GM12878 (cell line): ENCODE measurements at regions of chr17 and their contacts with region 1.

Region 1: DNA sequence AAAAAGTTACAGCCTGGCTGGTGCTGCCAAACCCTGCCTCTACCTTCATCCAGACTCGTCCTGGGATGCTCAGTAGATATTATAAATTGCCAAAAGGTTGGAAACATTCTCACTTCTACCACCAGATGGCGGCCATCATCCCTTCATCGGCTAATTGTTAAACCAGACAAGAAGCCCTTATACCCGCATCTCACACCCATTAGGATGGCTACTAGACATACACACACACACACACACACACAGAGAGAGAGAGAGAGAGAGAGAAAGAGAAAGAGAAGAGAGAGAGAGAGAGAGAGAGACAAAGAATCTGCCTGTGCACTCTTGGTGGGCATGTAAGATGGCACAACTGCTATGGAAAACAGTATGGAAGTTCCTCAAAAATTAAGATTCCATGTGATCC is 15.0 kb upstream of the SCIMP start:
- DNase-seq: no peak
- ATAC-seq: peak; percentile 95
- H3K4me3 ChIP-seq: no peak overlapping the region
- H3K27ac ChIP-seq: no peak overlapping the region
- H3K4me1 ChIP-seq: peaks cover 9% of the 10 kb centered on the region
- H3K27me3 ChIP-seq: no peaks in the 10 kb centered on the region
- CTCF ChIP-seq: peak; percentile 51 to 69 (median 67)
- EP300 ChIP-seq: no peak
- POLR2A ChIP-seq: no peak
- RAD21 ChIP-seq: peak; percentile 82

Region 2: DNA sequence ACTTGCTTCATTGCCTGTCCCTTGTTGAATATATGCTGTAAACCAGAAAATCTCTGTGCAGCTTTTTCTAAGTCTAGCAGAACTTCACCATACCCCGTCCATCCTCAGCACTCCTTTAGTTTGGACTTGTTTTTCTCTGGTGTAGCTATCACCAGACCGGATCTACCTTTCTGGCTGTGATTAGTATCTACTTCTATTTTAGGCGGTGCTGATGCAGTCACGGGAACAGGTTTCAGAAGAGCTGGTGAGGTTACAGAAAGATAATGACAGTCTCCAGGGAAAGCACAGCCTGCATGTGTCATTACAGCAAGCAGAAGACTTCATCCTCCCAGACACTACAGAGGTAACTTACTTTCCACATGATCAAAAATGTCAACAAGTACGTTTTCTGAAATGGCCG is 123.5 kb after region 1 on chr17:
- CTCF ChIA-PET with region 1: interaction called, 21 read pairs
- POLR2A ChIA-PET with region 1: no interaction called
- RAD21 ChIA-PET with region 1: no interaction called
- SMC1A ChIA-PET with region 1: no interaction called
- in situ Hi-C with region 1: no loop called
- intact Hi-C with region 1: no loop called
- DNase-seq: peak; percentile 61
- ATAC-seq: peak; percentile 96
- H3K4me3 ChIP-seq: no peak overlapping the region
- H3K27ac ChIP-seq: no peak overlapping the region
- H3K4me1 ChIP-seq: no peaks in the 10 kb centered on the region; the same call in 1 of the 2 replicates
- H3K27me3 ChIP-seq: no peaks in the 10 kb centered on the region
- CTCF ChIP-seq: no peak
- EP300 ChIP-seq: peak; percentile 56 to 72; a peak in 3 of 4 replicates
- POLR2A ChIP-seq: no peak
- RAD21 ChIP-seq: no peak